Activated T-helper 1 cell treated with anti-CD3 and anti-CD28 coated beads, Interleukin-12 subunit alpha, Interleukin-12 subunit beta, Interleukin-2, Interleukin-4 antibody, amounts not matched to agents 30 ng/mL and 10 ng/mL and 1 ng/mL, durations not matched to agents 14 hours and 24 hours and 36 hours (primary cell): ENCODE measurements at regions of chr7 and their contacts with region 1.

Region 1: GRCh38 chr7:30284298-30285066 is at the start of gene ZNRF2:
- DNase-seq: peak; percentile 99
- H3K4me3 Mint-ChIP-seq: peak within 1 kb of the TSS; percentile 78
- H3K27ac Mint-ChIP-seq: peak within 1 kb of the TSS; percentile 89
- H3K4me1 Mint-ChIP-seq: peaks cover 41% of the 10 kb centered on the region
- H3K27me3 Mint-ChIP-seq: no peaks in the 10 kb centered on the region
- total RNA-seq, gene ZNRF2: 8.4 and 9.3 TPM in 2 replicates

Region 2: DNA sequence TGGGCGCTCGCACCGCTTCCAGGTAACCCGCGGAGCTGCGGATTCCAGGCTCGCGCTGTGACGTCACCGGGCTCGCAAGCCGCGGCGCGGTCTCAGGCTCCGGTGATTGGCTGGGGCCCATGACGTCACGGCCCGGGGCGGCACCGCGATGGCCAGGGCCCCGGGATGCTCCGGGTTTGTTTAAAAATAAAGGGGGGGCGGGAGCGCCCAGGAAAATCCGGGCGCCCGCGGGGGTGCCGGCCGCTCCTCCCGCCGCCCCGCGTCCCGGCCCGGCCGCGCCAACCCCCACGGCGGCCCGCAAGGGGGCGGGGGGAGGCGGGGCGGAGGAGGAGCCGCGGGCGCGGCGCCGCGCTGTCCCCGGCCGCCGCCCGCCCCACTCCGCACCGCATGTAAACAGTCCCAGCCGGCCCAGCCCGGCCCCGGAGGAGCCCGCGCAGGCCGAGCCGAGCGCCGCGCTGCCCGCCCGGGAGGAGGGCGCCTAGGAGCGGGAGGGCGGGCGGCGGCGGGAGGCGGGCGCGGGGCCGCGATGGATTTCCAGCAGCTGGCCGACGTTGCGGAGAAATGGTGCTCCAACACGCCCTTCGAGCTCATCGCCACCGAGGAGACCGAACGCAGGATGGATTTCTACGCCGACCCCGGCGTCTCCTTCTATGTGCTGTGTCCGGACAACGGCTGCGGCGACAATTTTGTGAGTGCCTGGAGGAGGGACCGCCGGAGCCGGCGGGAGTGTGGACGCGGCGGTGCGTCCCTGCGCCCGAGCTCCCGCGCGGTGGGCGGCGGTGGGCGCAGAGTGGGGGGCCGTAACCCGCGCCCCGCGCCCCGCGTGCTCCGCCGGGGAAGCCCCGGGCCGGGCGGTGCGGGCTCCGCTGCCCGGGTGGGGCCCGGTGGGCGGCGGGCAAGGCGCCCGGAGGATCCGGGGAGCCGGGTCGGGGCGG is 149.6 kb before region 1 on chr7 and contains the start of gene MTURN:
- intact Hi-C with region 1: loop called (anchors 1 kb)
- DNase-seq: peak; percentile 83
- H3K4me3 Mint-ChIP-seq: peak within 1 kb of the TSS; percentile 89
- H3K27ac Mint-ChIP-seq: peak within 1 kb of the TSS; percentile 80
- H3K4me1 Mint-ChIP-seq: peaks cover 6% of the 10 kb centered on the region
- H3K27me3 Mint-ChIP-seq: peaks cover 17% of the 10 kb centered on the region
- total RNA-seq, gene MTURN: 3.9 and 4.3 TPM in 2 replicates

Region 3: GRCh38 chr7:30308389-30308788 is 23.9 kb after region 1 on chr7:
- intact Hi-C with region 1: loop called (anchors 1 kb)
- DNase-seq: no peak
- H3K4me3 Mint-ChIP-seq: no peak overlapping the region
- H3K27ac Mint-ChIP-seq: no peak overlapping the region
- H3K4me1 Mint-ChIP-seq: peaks cover 33% of the 10 kb centered on the region
- H3K27me3 Mint-ChIP-seq: peaks cover 1% of the 10 kb centered on the region

Region 4: GRCh38 chr7:30330134-30331111 is 45.9 kb after region 1 on chr7:
- intact Hi-C with region 1: loop called (anchors 1 kb)
- DNase-seq: peak; percentile 17
- H3K4me3 Mint-ChIP-seq: peak overlapping the region; percentile 60
- H3K27ac Mint-ChIP-seq: peak overlapping the region; percentile 18
- H3K4me1 Mint-ChIP-seq: peaks cover 39% of the 10 kb centered on the region
- H3K27me3 Mint-ChIP-seq: no peaks in the 10 kb centered on the region

Region 5: GRCh38 chr7:30412810-30413504 is 128.5 kb after region 1 on chr7:
- intact Hi-C with region 1: loop called (anchors 2 kb)
- DNase-seq: no peak
- H3K4me3 Mint-ChIP-seq: no peak overlapping the region
- H3K27ac Mint-ChIP-seq: no peak overlapping the region
- H3K4me1 Mint-ChIP-seq: no peaks in the 10 kb centered on the region
- H3K27me3 Mint-ChIP-seq: no peaks in the 10 kb centered on the region

Region 6: DNA sequence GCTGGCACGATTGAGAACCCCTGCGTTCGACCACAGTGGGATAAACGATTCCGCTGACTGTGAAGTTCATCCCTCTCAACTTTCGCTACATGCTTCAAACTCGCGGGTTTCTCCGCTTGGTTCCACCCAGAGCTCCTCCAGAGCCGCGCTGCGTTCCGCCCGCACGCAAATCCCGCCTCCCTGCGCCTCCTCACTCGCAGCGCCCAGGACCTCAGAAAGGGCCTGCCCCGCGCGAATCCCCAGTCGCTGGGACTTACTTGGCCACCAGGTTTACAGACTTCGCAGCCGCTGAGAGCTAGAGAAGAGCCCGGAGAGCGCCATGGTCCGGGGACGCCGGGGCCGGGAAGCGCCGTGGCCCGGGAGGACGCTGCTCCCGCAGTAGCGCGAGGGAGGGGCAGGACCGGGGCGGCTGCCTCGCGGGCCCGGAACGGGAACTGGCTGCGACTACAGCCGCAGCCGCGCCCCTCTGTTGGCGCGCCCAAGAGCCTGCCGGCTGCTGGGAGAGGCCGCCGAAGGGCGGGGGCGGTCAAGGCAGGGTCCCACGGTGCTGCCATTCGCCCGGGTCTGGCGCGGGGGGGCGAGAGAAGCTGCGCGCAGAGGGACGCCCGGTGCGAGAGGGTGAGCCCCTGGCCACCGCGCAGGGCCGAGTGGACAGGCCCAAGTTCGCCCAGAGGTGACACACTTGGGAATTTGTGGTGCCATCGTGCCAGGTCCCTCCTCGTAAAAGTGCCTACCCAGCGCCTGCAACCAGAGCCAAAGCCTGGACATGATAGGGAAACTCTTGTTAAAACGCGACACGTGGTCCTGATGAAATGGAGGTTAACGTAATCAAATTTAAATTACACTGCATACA is 194.1 kb after region 1 on chr7 and contains the start of gene NOD1:
- intact Hi-C with region 1: loop called (anchors 1 kb)
- DNase-seq: peak; percentile 71
- H3K4me3 Mint-ChIP-seq: peak within 1 kb of the TSS; percentile 90
- H3K27ac Mint-ChIP-seq: peak within 1 kb of the TSS; percentile 91
- H3K4me1 Mint-ChIP-seq: peaks cover 61% of the 10 kb centered on the region
- H3K27me3 Mint-ChIP-seq: no peaks in the 10 kb centered on the region
- total RNA-seq, gene NOD1: 9.1 and 13.1 TPM in 2 replicates

Region 7: DNA sequence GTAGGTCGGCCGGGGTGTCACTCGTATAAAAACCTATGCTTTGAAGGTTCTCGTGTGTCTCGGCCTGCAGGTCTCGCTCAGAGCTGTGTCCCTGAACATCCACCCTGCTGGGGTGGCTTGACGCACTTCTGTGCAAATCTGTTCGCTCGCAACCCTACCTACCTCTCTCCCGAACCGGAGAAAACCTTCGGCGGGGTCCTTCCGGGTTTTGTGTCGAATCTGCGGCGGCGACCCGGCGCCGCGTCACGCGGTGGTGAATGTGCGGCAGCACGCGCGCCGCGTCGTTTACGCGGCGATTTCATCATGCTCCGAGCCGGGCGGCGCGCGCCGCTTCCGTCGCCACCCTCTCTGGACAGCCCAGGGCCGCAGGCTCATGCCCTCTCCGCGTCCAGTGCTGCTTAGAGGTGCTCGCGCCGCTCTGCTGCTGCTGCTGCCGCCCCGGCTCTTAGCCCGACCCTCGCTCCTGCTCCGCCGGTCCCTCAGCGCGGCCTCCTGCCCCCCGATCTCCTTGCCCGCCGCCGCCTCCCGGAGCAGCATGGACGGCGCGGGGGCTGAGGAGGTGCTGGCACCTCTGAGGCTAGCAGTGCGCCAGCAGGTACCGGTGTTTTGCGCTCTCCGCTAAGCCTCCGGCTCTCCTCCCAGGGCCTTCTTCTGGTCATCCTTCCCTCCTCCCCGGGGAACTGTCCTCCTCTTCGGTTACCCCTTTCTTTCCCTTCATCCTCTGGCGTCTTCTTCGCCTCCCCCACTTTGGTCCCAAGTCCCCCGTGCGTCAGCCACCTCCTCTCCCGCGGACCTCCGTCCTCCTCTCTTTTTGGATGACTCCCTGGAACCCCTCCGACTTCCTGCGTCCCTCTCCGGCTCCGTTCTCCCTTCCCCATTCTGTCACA is 310.3 kb after region 1 on chr7 and contains the start of gene GARS1:
- intact Hi-C with region 1: loop called (anchors 1 kb)
- DNase-seq: peak; percentile 88
- H3K4me3 Mint-ChIP-seq: peak within 1 kb of the TSS; percentile 99
- H3K27ac Mint-ChIP-seq: peak within 1 kb of the TSS; percentile 99
- H3K4me1 Mint-ChIP-seq: peaks cover 71% of the 10 kb centered on the region
- H3K27me3 Mint-ChIP-seq: no peaks in the 10 kb centered on the region
- total RNA-seq, gene GARS1: 234 and 250 TPM in 2 replicates